ENCODE measurements at regions of chr1 and their contacts with region 1.

Region 1: GRCh38 chr1:169914531-169914930 is 20.8 kb upstream of the SCYL3 start:
- DNase-seq: no peak
- CTCF ChIP-seq: no peak

Region 2: DNA sequence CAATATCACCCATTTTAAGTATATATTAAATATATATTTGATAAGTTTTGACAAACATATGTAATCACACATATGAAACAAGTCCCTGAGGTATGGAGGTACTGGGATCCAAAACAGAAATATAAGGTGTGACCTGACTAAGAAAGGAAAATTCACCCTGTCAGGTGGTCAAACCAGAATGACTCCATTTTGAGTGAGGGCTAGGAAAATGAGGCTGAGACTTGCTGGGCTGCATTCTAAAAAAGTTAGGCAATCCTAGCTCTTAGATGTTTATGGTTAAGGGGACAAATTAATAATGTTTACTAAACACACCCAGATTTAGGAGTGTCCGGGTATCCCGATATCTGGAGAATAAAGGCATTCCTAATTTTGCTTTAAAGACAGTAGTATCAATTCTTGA is 417.2 kb before region 1 on chr1:
- CTCF ChIA-PET with region 1: no interaction called
- POLR2A ChIA-PET with region 1: no interaction called
- DNase-seq: no peak
- CTCF ChIP-seq: no peak

Region 3: GRCh38 chr1:169928438-169929209 is 14.1 kb after region 1 on chr1:
- CTCF ChIA-PET with region 1: interaction called, 22 read pairs
- POLR2A ChIA-PET with region 1: no interaction called
- DNase-seq: no peak
- CTCF ChIP-seq: peak; percentile 65